MCF 10A (cell line): ENCODE measurements at regions of chr14 and their contacts with region 1.

Region 1: DNA sequence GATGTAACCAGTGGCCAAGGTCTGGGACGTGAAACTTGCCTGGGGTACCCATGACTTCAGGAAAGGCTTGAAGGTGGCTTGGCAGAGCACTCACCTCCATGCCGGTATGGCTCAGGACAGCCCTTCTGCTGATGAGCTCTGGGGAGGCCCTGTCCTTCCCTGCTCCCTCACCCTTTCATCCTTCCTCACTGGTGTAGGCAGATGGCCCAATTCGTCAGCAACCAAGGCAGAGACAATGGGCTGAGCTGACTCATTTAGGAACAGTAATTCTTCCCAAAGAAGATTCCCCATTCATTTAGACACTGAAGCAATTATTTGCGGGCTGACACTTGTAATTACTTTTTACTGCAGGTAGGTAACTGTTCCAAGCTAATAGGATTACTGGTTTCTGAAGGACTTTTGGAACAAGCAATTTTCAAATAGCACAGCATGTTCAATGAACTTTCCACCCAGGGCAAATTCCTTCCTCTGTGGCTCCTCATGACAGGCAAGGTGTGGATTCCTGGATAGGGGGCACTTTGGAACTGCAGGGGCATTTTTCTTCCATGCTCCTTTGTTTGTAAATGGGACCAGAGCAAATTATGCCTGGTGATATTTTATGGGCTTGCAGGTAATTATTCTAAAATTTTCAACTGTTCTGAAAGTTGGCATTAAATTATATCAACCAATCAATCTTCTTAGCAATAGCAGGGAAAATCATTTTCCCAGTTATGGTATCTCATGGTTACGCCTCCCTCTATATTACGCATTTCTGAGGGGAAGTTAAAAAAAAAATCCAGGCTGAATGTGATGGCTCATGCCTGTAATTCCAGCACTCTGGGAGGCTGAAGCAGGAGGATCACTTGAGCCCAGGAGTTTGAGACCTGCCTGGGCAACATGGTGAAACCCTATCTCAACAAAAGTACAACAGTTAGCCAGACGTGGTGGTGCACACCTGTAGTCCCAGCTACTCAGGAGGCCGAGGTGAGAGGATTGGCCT is 24.1 kb upstream of the NRDE2 start:
- DNase-seq: peak; percentile 5
- H3K4me3 Mint-ChIP-seq: no peak overlapping the region
- H3K27ac Mint-ChIP-seq: no peak overlapping the region
- H3K4me1 Mint-ChIP-seq: no peaks in the 10 kb centered on the region
- H3K27me3 Mint-ChIP-seq: no peaks in the 10 kb centered on the region
- CTCF ChIP-seq: no peak

Region 2: DNA sequence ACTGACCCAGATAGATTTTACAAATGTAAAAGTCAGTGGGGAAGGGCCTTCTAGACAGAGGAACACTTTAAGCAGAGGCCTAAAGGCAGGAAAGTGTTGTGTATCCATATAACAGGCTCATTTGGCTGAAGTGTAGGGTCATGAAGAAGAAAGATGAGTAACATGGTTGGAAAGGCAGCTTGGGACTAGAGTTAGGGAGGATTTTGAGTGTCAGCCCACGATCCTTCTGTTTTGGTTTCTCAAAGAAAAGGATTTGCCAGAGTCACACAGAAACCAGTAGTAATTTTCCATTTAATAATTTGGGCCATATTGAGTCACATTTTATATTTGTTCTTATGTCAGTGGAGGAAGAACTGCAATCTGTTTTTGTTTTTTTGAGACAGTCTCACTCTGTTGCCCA is 1716.6 kb before region 1 on chr14:
- CTCF ChIA-PET with region 1: no interaction called
- POLR2A ChIA-PET with region 1: no interaction called
- intact Hi-C with region 1: loop called (anchors 10 kb)
- DNase-seq: no peak
- H3K4me3 Mint-ChIP-seq: no peak overlapping the region
- H3K27ac Mint-ChIP-seq: no peak overlapping the region
- H3K4me1 Mint-ChIP-seq: no peaks in the 10 kb centered on the region
- H3K27me3 Mint-ChIP-seq: no peaks in the 10 kb centered on the region
- CTCF ChIP-seq: no peak